Activated B cell treated with CpG ODN at 0.5 μM for 24 hours (primary cell): ENCODE measurements at regions of chr7 and their contacts with region 1.

Region 1: GRCh38 chr7:152463709-152464311 is 28.0 kb upstream of the KMT2C start:
- DNase-seq: peak; percentile 100
- ATAC-seq: peak; percentile 91
- H3K4me3 Mint-ChIP-seq: peak overlapping the region; percentile 97
- H3K27ac Mint-ChIP-seq: peak overlapping the region; percentile 53
- H3K4me1 Mint-ChIP-seq: peaks cover 26% of the 10 kb centered on the region
- H3K27me3 Mint-ChIP-seq: no peaks in the 10 kb centered on the region
- CTCF ChIP-seq: no peak

Region 2: DNA sequence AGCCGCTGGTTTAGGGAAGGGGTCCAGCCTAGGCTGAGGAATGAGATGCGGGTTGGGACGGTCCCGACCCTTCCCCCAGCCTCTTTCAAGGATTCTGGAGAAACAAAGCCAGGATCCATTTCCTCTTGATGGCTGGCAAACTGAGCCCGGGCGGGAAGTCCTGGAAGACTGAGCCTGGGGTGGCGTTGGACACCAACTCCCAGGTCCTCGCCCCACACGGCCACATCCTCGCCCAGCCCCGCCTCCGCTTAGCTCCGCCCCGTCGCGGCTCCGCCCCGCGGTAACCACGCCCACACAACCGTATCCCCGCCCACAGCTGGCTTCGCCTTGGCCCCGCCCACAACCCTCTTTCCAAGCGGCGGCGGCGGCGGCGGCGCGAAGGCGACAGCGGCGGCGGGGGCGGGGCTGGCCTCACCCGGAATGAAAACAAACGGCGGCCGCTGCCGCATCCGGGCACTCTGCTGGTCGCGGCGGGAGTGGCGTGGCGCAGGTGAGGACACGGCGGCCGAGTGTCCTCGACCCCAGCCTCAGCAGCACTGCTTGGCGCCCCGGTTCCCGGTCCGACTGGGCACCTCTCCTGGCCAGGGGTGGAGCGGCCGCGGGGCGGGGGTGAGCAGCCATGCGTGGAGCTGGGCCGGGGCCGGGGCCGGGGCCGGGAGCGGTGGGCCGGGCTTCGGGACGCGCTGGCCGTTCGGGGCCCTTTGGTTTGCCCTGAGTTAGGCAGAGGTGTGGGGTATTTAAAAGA is 1122.3 kb before region 1 on chr7 and contains the start of gene NUB1:
- CTCF ChIA-PET with region 1: no interaction called
- POLR2A ChIA-PET with region 1: no interaction called
- intact Hi-C with region 1: loop called (anchors 5 kb)
- DNase-seq: peak; percentile 99
- ATAC-seq: peak; percentile 90
- H3K4me3 Mint-ChIP-seq: peak within 1 kb of the TSS; percentile 86
- H3K27ac Mint-ChIP-seq: peak within 1 kb of the TSS; percentile 93
- H3K4me1 Mint-ChIP-seq: peaks cover 52% of the 10 kb centered on the region
- H3K27me3 Mint-ChIP-seq: no peaks in the 10 kb centered on the region
- CTCF ChIP-seq: no peak
- total RNA-seq, gene NUB1: 47.5 and 52.7 TPM in 2 replicates

Region 3: DNA sequence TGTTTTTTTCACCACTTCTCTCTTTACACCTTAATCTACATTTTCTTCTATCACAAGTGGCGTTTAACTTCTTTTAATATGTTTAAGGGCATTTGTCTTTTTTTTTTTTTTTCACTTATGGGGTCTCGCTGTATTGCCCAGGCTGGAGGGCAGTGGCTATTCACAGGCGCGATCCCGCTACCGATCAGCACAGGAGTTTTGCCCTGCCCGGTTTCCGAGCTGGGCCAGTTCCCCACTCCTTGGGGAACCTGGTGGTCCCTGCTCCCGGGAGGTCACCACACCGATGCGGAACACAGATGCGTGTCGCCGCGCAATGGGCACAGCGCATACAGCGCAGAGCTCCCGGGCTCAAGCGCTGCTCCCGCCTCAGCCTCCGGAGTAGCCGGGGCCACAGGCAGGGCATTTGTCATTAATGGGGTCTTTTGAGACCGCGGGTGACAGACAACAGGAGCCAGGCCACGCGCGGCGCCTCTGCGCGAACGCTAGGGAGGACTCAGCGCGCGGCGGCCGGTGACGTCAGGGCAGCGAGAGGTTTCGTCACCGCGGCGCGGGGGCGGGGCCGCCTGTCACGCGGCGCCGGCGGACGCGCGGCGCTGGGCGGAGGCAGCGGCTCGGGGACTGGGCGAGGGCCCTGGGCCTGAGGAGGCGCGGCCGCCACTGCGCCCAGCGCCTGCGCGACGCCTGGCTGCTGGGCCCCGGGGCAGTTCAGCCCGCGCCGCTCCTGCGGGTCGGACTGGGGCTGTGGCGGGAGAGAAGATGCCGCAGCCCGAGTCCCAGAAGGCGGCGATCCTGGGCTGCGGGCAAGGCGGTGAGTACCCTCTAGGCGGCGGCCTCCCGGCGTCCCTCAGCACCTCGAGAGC is 438.5 kb before region 1 on chr7 and contains the start of gene GALNT11:
- CTCF ChIA-PET with region 1: no interaction called
- POLR2A ChIA-PET with region 1: no interaction called
- intact Hi-C with region 1: loop called (anchors 10 kb)
- DNase-seq: peak; percentile 90
- ATAC-seq: peak; percentile 92
- H3K4me3 Mint-ChIP-seq: peak within 1 kb of the TSS; percentile 87
- H3K27ac Mint-ChIP-seq: peak within 1 kb of the TSS; percentile 81
- H3K4me1 Mint-ChIP-seq: peaks cover 11% of the 10 kb centered on the region
- H3K27me3 Mint-ChIP-seq: no peaks in the 10 kb centered on the region
- CTCF ChIP-seq: no peak
- total RNA-seq, gene GALNT11: 9.0 and 10.8 TPM in 2 replicates

Region 4: DNA sequence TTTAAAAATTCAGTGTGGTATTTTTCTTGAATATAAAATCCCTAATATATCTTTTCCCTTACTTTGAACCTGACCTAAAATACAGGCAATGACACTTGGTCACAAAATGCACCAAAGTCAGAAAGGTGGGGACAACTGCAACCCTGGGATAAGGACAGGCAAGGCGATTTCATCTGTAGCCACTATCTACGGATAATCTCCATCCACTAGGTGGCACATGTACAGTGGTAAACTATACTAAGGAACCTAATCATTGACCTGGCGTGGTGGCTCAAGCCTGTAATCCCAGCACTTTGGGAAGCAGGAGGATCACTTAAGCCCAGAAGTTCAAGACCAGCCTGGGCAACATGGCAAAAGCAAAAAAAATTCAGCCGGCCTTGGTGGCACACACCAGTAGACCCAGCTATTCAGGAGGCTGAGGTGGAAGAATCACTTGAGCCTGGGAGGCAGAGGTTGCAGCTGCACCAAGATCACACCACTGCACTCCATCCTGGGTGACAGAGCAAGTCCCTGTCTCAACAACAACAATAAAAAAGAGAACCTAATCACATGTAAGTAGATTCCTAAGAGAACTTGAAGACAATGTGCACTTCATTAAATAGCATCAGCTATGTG is 126.9 kb before region 1 on chr7:
- CTCF ChIA-PET with region 1: no interaction called
- POLR2A ChIA-PET with region 1: interaction called, 3 read pairs
- intact Hi-C with region 1: loop called (anchors 2 kb)
- DNase-seq: no peak
- ATAC-seq: peak; percentile 45
- H3K4me3 Mint-ChIP-seq: no peak overlapping the region
- H3K27ac Mint-ChIP-seq: no peak overlapping the region
- H3K4me1 Mint-ChIP-seq: peaks cover 63% of the 10 kb centered on the region
- H3K27me3 Mint-ChIP-seq: no peaks in the 10 kb centered on the region
- CTCF ChIP-seq: peak; percentile 49

Region 5: GRCh38 chr7:152436111-152436930 is 27.5 kb before region 1 on chr7:
- CTCF ChIA-PET with region 1: no interaction called
- POLR2A ChIA-PET with region 1: interaction called, 26 read pairs
- intact Hi-C with region 1: loop called (anchors 1 kb)
- DNase-seq: peak; percentile 85
- ATAC-seq: peak; percentile 64
- H3K4me3 Mint-ChIP-seq: peak overlapping the region; percentile 83
- H3K27ac Mint-ChIP-seq: peak overlapping the region; percentile 84
- H3K4me1 Mint-ChIP-seq: peaks cover 29% of the 10 kb centered on the region
- H3K27me3 Mint-ChIP-seq: no peaks in the 10 kb centered on the region
- CTCF ChIP-seq: no peak

Region 6: GRCh38 chr7:152512706-152513105 is 48.9 kb after region 1 on chr7:
- CTCF ChIA-PET with region 1: no interaction called
- POLR2A ChIA-PET with region 1: interaction called, 15 read pairs
- intact Hi-C with region 1: loop called (anchors 1 kb)
- DNase-seq: no peak
- ATAC-seq: peak; percentile 50
- H3K4me3 Mint-ChIP-seq: peak overlapping the region; percentile 35
- H3K27ac Mint-ChIP-seq: no peak overlapping the region
- H3K4me1 Mint-ChIP-seq: peaks cover 5% of the 10 kb centered on the region
- H3K27me3 Mint-ChIP-seq: peaks cover 2% of the 10 kb centered on the region
- CTCF ChIP-seq: no peak

Region 7: GRCh38 chr7:152759949-152760853 is 296.4 kb after region 1 on chr7:
- CTCF ChIA-PET with region 1: no interaction called
- POLR2A ChIA-PET with region 1: interaction called, 11 read pairs
- intact Hi-C with region 1: loop called (anchors 2 kb)
- DNase-seq: no peak
- ATAC-seq: peak; percentile 17
- H3K4me3 Mint-ChIP-seq: peak overlapping the region; percentile 91
- H3K27ac Mint-ChIP-seq: peak overlapping the region; percentile 77
- H3K4me1 Mint-ChIP-seq: peaks cover 21% of the 10 kb centered on the region
- H3K27me3 Mint-ChIP-seq: no peaks in the 10 kb centered on the region
- CTCF ChIP-seq: no peak

Region 8: GRCh38 chr7:153657182-153657800 is 1193.5 kb after region 1 on chr7:
- CTCF ChIA-PET with region 1: no interaction called
- POLR2A ChIA-PET with region 1: no interaction called
- intact Hi-C with region 1: no loop called
- DNase-seq: no peak
- ATAC-seq: no peak
- H3K4me3 Mint-ChIP-seq: no peak overlapping the region
- H3K27ac Mint-ChIP-seq: no peak overlapping the region
- H3K4me1 Mint-ChIP-seq: no peaks in the 10 kb centered on the region
- H3K27me3 Mint-ChIP-seq: no peaks in the 10 kb centered on the region
- CTCF ChIP-seq: no peak